Right cardiac atrium (tissue), 5 donors: ENCODE measurements at regions of chr11 and their contacts with region 1.

Region 1: DNA sequence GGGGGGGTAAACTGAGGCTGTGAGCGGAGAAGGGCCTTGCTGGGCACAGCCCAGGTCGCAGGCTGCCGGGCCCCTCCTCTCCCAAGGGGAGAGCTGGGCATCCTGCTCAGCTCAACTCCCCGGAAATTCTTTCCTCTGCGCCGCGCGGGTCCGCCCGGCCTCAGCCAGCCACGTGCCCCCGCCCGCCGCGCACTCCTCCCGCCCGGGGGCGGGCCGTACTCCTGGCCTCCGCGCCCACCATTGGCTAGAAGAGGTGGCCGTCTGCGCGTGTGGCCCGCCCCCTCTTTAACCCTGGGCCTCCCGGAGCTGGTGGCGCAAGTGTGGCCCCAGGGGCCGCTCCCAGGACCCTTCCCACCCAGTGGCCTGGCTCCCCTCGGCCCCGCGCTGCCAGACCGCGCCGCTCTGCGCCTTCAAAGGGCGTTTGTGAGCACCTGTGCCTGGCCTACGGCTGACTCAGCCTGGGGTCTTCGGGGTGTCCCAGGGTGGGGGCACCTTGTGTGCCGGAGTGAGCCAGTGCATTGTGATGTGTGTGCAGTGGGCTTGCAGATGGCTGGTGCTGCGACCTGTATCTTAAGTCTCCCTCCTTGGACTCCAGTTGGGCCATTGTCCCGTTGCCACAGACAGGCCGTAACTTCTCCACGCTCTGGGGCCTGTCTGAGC is 2.0 kb downstream of the MRGPRF start:
- DNase-seq: peak; percentile 84 to 94 (median 93)
- ATAC-seq: peak; percentile 70 to 81
- H3K4me3 ChIP-seq: peak overlapping the region; percentile 33
- H3K27ac ChIP-seq: peak overlapping the region; percentile 31
- H3K4me1 ChIP-seq: peaks cover 2% of the 10 kb centered on the region
- H3K27me3 ChIP-seq: no peaks in the 10 kb centered on the region

Region 2: GRCh38 chr11:68946465-68947036 is 64.5 kb before region 1 on chr11:
- intact Hi-C with region 1: loop called in 1 of 4 experiments (anchors 10 kb)
- DNase-seq: peak in 1 of 3 donors; percentile 47
- ATAC-seq: peak; percentile 64 to 86
- H3K4me3 ChIP-seq: no peak overlapping the region
- H3K27ac ChIP-seq: no peak overlapping the region
- H3K4me1 ChIP-seq: no peaks in the 10 kb centered on the region
- H3K27me3 ChIP-seq: no peaks in the 10 kb centered on the region